ENCODE measurements at regions of chr5 and their contacts with region 1.

Region 1: DNA sequence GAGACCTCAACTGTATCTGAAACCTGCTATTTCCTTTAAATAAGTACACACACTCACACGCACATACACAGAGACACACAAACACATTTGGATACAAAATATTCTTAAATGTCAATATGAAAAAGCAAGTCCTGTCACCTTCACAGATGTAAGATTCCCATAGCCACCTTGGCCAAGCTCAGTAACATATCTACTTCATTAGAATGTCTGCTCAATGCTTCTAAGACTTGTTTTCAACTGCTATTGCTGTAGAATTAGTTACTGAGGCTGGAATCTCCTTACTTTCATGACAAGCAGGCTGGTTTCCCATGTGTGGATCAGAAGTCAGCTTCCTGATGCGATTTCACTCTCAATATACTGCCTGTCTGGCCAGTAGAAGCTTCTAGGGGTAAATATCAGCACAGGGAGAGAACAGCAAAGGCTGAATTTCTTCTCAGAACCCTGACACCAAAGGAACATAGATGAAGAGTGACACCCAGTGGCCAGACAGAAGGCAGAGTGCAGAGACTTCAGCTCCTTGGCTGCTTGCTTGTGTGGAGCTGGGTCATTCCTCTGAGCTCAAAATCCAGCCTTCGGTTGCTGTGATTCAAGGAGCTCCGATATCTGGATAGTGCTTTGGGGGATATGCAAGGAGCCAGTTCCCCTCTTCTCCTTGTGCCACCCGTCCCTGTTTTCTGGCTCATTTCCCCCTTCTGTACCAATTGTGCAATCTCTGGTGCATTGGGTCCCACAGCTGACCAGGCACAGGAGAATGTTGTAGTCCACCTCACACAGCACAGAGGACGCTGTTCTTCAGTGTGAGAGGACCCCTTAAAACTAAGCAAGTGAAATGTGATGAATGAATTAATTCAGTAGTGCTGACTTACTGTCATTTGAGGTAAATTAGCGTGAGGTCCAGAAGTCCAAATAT is 26.6 kb upstream of the ABLIM3 start:
- DNase-seq: peak in 41 of 42 donors; percentile 51 to 92 (median 79)

Region 2: DNA sequence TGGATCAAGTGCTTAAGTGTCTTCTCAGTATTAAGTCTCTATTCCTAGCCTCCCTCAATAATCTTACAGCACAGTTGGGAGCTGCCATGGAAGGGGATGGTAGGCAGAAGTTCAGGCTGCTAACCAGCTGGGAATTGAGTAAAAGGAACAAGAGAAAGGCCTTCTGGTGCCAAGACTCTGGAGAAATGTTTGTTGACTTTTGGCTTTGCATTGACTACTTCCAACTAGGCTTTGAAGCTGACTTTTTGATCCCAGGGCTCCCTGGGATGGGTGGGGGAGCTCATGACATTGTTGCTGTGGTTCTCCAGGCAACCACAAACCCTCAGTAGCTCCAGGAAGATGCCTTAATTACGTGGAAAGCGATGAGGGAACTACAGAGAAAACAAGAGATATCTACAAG is 375.1 kb before region 1 on chr5:
- intact Hi-C with region 1: loop called (anchors 5 kb)
- DNase-seq: no peak

Region 3: DNA sequence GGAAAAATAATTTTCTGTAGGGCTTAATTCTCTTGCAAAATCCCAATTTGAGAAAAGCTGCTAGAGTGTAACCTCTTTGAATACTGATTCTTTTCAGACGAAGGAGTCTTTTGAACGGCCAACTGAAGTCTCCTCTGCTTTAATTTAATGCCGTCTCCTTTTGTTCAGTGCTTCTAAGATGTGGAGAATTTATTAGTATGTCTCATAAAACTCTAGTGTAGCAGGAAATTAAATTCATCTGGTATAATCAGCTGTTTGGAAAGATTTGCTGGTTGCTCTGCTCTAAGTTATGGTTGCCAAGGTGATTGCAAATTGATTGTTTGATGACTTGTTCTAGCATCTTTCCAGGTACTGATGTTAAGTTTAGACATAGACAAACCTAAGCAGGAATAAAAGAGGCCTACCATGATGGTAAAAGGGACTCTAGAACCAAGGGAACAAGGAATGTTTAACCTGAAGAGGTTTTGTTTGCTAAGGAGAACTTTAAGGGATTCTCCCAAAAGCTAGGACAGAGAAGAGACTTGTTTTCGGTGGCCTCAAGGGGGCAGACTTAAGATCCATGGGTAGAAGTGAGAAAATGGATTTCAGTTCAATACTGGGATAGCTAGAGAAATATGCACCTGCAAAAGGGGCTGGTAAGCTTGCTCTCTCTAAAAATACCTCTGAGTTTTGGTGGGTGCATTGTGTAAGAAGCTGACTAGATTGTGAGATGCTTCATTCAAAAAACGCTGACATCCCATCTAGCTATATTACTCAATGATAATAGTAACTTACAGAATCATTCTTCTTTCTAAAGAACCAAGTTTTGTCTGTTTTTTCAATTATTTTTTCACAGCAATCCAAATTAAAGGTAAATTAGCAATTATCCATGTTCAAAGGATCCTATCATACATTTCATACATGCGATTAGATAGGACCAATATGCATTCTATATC is 293.9 kb before region 1 on chr5:
- intact Hi-C with region 1: loop called (anchors 5 kb)
- DNase-seq: peak in 9 of 42 donors; percentile 17 to 72 (median 24)

Measured in head of caudate nucleus (tissue), 42 donors.